ENCODE measurements at regions of chr2 and their contacts with region 1.

Region 1: GRCh38 chr2:207746131-207746530 is 23.6 kb downstream of the FZD5 start:
- DNase-seq: peak; percentile 50
- H3K4me3 ChIP-seq: no peak overlapping the region
- H3K27ac ChIP-seq: no peak overlapping the region
- H3K4me1 ChIP-seq: no peaks in the 10 kb centered on the region
- H3K27me3 ChIP-seq: no peaks in the 10 kb centered on the region
- CTCF ChIP-seq: peak; percentile 73

Region 2: GRCh38 chr2:207676827-207677354 is 69.2 kb before region 1 on chr2:
- intact Hi-C with region 1: no loop called
- DNase-seq: no peak
- H3K4me3 ChIP-seq: no peak overlapping the region
- H3K27ac ChIP-seq: no peak overlapping the region
- H3K4me1 ChIP-seq: no peaks in the 10 kb centered on the region
- H3K27me3 ChIP-seq: no peaks in the 10 kb centered on the region
- CTCF ChIP-seq: no peak

Region 3: DNA sequence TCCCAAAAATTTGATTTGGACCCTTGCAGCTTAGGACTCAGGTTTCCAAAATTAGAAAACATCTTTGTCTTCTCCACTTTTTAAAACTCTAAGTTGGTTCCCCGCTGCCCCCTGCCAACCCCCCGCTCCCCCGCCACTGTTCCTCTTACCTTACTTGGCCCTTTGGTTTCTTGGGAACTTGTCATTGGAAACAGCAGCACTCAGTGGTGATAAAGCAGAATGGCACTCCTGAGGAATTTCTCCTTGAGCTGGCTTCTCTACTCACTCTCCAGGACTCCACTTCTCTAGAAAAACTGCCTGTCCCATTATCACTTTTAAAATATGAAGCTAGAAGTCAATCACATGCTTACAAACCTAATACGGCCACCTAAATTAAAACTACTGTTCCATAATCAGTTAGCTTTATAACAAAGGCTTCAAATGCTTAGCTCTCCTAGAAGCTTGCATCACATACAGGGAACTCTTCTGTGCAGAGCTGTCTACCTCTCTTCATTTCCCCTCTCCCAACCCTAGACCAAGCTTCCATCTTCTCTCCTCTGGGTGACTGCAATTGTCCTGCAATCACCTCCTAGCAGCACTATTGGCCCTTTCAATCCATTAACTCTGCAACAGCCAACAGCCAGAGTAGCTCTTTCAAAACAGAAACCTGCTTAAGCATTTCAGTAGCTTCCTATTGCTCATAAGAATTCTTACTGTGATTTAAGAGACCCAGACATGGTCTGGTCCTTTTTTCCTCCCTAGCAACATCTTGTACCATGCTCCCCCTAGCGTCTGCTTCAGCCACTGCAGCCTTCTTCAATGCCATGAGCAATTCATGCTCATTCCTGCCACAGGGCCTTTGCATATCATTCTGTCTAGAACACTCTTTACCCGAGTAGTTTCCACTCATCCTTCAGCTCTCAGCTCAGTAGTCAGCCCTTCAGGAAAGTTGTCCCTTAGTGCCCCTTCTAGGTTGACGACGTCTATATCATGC is 294.4 kb after region 1 on chr2:
- intact Hi-C with region 1: loop called (anchors 5 kb)
- DNase-seq: peak; percentile 85
- H3K4me3 ChIP-seq: no peak overlapping the region
- H3K27ac ChIP-seq: no peak overlapping the region
- H3K4me1 ChIP-seq: no peaks in the 10 kb centered on the region
- H3K27me3 ChIP-seq: no peaks in the 10 kb centered on the region
- CTCF ChIP-seq: peak; percentile 63

Measured in colonic mucosa (tissue), 4 donors.